Activated T-helper 1 cell treated with anti-CD3 and anti-CD28 coated beads, Interleukin-12 subunit alpha, Interleukin-12 subunit beta, Interleukin-2, Interleukin-4 antibody, amounts not matched to agents 30 ng/mL and 10 ng/mL and 1 ng/mL, durations not matched to agents 14 hours and 24 hours and 36 hours (primary cell): ENCODE measurements at regions of chr15 and their contacts with region 1.

Region 1: GRCh38 chr15:58704155-58704865 is 45.2 kb downstream of the ADAM10 start:
- DNase-seq: no peak
- H3K4me3 Mint-ChIP-seq: no peak overlapping the region
- H3K27ac Mint-ChIP-seq: no peak overlapping the region
- H3K4me1 Mint-ChIP-seq: peaks cover 49% of the 10 kb centered on the region
- H3K27me3 Mint-ChIP-seq: no peaks in the 10 kb centered on the region

Region 2: DNA sequence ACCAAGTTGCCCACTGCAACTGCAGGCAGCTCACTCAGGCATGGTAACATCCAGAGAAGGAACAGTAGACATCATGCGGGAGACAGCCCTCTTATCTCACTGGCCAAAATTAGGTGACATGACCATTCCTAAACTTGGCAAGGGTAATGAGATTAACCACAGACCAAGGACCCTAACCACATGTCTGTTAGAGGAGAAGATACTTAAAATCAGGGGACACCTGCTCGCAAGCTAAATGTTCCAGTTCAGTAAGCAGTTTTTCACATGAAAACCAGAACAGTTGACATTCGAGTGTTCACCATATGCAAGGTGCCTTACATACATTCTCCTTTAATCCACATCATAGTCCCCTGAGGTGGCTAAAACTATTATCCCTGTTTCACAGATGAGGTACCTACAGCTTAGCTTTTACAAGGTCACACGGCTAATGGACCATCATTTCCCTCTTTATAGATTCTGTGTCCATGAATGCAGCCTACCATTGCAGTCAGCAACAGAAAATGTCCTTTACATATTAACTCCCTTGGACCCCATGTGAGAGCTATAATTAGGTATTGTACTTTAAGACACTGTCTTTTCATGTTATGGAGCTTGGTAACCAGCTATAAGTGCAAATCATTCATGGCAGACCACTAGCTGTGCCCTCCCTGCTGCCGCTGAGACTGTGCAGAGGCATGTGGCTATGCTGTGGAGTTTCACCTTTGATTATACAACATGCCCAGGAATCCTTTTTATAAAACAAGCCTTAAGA is 118.4 kb before region 1 on chr15:
- intact Hi-C with region 1: no loop called
- DNase-seq: no peak
- H3K4me3 Mint-ChIP-seq: no peak overlapping the region
- H3K27ac Mint-ChIP-seq: peak overlapping the region; percentile 66
- H3K4me1 Mint-ChIP-seq: peaks cover 24% of the 10 kb centered on the region
- H3K27me3 Mint-ChIP-seq: peaks cover 4% of the 10 kb centered on the region

Region 3: DNA sequence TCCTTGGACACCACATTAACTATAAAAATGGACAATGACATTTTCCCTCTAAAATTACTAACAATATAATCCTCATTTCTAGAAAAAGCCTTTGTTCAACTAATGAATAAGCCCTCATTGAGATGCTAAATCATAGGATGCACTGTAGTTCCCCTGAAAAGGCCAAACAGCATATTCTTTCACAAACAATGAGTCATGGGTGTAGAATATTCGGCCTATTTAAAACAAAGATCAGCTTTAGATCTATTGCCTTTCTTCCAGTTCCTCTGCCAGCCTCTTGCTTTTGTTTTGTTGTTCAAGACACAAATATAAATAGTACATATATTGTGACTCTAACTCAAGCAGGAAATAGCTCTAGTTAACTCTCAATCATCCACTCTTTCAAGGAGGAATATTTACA is 37.4 kb before region 1 on chr15:
- intact Hi-C with region 1: loop called (anchors 5 kb)
- DNase-seq: no peak
- H3K4me3 Mint-ChIP-seq: no peak overlapping the region
- H3K27ac Mint-ChIP-seq: no peak overlapping the region
- H3K4me1 Mint-ChIP-seq: peaks cover 14% of the 10 kb centered on the region
- H3K27me3 Mint-ChIP-seq: no peaks in the 10 kb centered on the region

Region 4: GRCh38 chr15:58980351-58980939 is 276.1 kb after region 1 on chr15:
- intact Hi-C with region 1: no loop called
- DNase-seq: no peak
- H3K4me3 Mint-ChIP-seq: no peak overlapping the region
- H3K27ac Mint-ChIP-seq: peak overlapping the region; percentile 14
- H3K4me1 Mint-ChIP-seq: peaks cover 50% of the 10 kb centered on the region
- H3K27me3 Mint-ChIP-seq: peaks cover 8% of the 10 kb centered on the region